Dendritic cell treated with granulocyte-macrophage colony-stimulating factor and Interleukin-4, amounts not matched to agents 40 ng/mL and 50 ng/mL, for 4 days (primary cell): ENCODE measurements at regions of chr4 and their contacts with region 1.

Region 1: DNA sequence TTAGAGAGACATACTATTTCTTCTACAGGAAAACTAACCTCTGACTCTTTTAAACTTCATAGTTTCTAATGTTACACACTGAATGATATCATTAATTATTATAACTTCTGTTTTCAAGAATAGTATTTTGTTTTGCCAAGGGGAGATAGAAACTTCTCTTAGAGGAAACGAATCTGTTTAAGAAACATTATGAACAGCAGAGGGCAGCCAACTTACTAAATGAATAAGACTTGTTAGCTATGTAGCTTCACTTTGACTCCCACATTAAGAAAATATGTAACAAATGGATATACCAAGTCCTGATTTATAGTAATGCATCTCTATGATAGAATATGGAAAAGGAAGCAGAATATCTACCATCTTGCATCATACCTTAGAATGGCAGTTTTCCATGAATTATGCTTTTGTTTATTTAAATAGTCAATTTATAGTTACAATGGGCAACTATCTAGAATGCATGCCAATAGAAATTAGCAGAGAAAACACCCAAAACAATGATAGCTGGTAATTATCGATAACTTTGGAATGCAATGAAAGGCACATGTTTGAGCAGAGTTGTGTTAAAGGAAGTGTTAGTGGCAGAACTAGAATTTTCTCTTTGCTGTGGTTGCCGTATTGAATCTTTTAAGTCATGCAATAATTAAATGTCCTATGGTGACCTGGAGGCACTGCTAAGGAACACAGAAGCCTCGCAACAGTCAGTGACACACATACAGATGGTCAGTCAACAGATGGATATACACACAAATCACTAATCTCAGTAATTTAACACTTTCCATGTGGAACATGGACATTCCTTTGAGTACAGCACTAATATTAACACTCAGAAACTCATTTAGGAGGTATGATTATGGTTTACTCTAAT is 105.7 kb upstream of the PDLIM3 start:
- H3K4me3 Mint-ChIP-seq: no peak overlapping the region
- H3K27ac Mint-ChIP-seq: no peak overlapping the region
- H3K4me1 Mint-ChIP-seq: no peaks in the 10 kb centered on the region
- H3K27me3 Mint-ChIP-seq: peaks cover 30% of the 10 kb centered on the region

Region 2: DNA sequence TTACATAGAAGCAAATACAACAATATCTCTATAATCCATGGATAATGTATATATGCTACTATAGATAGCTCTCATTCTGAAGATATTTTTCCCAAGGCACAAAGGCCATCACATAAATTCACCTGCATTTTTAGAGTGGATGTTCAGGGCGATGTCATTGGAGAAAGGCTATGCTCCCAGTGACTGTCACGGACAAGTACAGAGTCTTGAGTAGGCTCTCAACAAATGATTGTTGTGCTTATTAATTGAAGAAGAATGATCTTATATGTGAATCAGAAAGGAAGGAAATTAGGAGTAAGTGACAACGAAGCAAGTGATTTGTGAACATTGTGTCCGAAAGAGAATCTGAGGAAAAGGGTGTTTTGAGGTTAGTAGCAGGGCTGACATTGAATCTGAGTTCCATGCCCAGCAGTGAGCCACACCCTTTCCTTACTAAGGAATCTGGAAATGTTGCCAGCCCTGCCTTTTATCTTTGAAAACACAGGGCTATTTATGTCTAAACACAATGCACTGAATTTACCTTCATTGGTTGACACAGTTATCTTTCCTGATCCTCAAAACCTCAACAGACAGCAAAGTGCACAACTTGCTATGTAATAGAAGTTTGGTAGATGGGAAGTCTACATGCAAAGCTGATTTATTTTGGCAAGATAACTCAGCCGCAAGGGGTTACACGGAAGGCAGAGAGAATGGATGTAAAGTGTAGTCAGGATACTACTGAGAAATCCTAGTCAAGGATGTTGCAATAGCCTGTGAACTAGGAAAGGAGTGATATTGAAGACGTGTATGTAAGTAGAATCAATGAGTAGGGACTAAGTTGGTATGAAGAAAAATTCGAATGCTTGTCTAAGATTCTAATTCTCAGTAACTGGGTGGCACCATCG is 120.6 kb after region 1 on chr4:
- intact Hi-C with region 1: no loop called
- H3K4me3 Mint-ChIP-seq: no peak overlapping the region
- H3K27ac Mint-ChIP-seq: no peak overlapping the region
- H3K4me1 Mint-ChIP-seq: no peaks in the 10 kb centered on the region
- H3K27me3 Mint-ChIP-seq: peaks cover 18% of the 10 kb centered on the region

Region 3: GRCh38 chr4:186037692-186038658 is 396.9 kb after region 1 on chr4:
- intact Hi-C with region 1: loop called (anchors 1 kb)
- H3K4me3 Mint-ChIP-seq: no peak overlapping the region
- H3K27ac Mint-ChIP-seq: no peak overlapping the region
- H3K4me1 Mint-ChIP-seq: no peaks in the 10 kb centered on the region
- H3K27me3 Mint-ChIP-seq: peaks cover 17% of the 10 kb centered on the region

Region 4: GRCh38 chr4:186137196-186137794 is 496.3 kb after region 1 on chr4:
- intact Hi-C with region 1: loop called (anchors 2 kb)
- H3K4me3 Mint-ChIP-seq: no peak overlapping the region
- H3K27ac Mint-ChIP-seq: no peak overlapping the region
- H3K4me1 Mint-ChIP-seq: peaks cover 15% of the 10 kb centered on the region
- H3K27me3 Mint-ChIP-seq: peaks cover 23% of the 10 kb centered on the region